ENCODE measurements at regions of chr1 and their contacts with region 1.

Region 1: GRCh38 chr1:103106426-103107341 is 1.6 kb downstream of the COL11A1 start:
- DNase-seq: peak in 1 of 4 experiments; percentile 10
- ATAC-seq: no peak
- H3K4me3 ChIP-seq: no peak overlapping the region
- H3K27ac ChIP-seq: no peak overlapping the region
- H3K4me1 ChIP-seq: no peaks in the 10 kb centered on the region
- H3K27me3 ChIP-seq: no peaks in the 10 kb centered on the region
- CTCF ChIP-seq: peak in 1 of 3 experiments; percentile 14; a peak in 1 of 6 replicates
- EP300 ChIP-seq: no peak
- POLR2A ChIP-seq: no peak
- RAD21 ChIP-seq: no peak; a peak in 1 of 4 replicates

Region 2: GRCh38 chr1:103514920-103515503 is 408.3 kb after region 1 on chr1:
- CTCF ChIA-PET with region 1: no interaction called
- POLR2A ChIA-PET with region 1: no interaction called
- in situ Hi-C with region 1: no loop called
- intact Hi-C with region 1: loop called (anchors 10 kb)
- DNase-seq: peak; percentile 13 to 48 (median 18)
- ATAC-seq: peak; percentile 73
- H3K4me3 ChIP-seq: no peak overlapping the region
- H3K27ac ChIP-seq: no peak overlapping the region
- H3K4me1 ChIP-seq: no peaks in the 10 kb centered on the region
- H3K27me3 ChIP-seq: no peaks in the 10 kb centered on the region
- CTCF ChIP-seq: peak; percentile 35 to 68 (median 51); a peak in 5 of 6 replicates
- EP300 ChIP-seq: no peak
- POLR2A ChIP-seq: no peak
- RAD21 ChIP-seq: peak; percentile 67 to 72